ENCODE measurements at regions of chr22 and their contacts with region 1.

Region 1: GRCh38 chr22:42820066-42820763 is 36.9 kb downstream of the ARFGAP3 start:
- DNase-seq: no peak
- ATAC-seq: peak in 2 of 4 donors; percentile 26 to 41
- H3K4me3 ChIP-seq: no peak overlapping the region
- H3K27ac ChIP-seq: peak overlapping the region in 3 of 12 donors; percentile 16 to 39 (median 21)
- H3K4me1 ChIP-seq: peaks cover 0 to 12% (median 5%) of the 10 kb centered on the region in 12 donors
- H3K27me3 ChIP-seq: no peaks in the 10 kb centered on the region
- CTCF ChIP-seq: peak; percentile 37 to 78 (median 64)
- POLR2A ChIP-seq: no peak

Region 2: GRCh38 chr22:42621505-42622002 is 198.7 kb before region 1 on chr22:
- intact Hi-C with region 1: loop called in 4 of 10 experiments (anchors 1 to 10 kb)
- DNase-seq: peak; percentile 64 to 85 (median 73)
- ATAC-seq: peak; percentile 38 to 68 (median 60)
- H3K4me3 ChIP-seq: no peak overlapping the region
- H3K27ac ChIP-seq: peak overlapping the region in 6 of 12 donors; percentile 32 to 67 (median 54)
- H3K4me1 ChIP-seq: peaks cover 0 to 43% (median 20%) of the 10 kb centered on the region in 12 donors
- H3K27me3 ChIP-seq: no peaks in the 10 kb centered on the region
- CTCF ChIP-seq: peak; percentile 85 to 94 (median 91)
- POLR2A ChIP-seq: no peak

Region 3: GRCh38 chr22:42662114-42663021 is 157.8 kb before region 1 on chr22:
- intact Hi-C with region 1: loop called in 9 of 10 experiments (anchors 2 to 10 kb)
- DNase-seq: peak; percentile 81 to 92 (median 84)
- ATAC-seq: peak; percentile 60 to 95 (median 92)
- H3K4me3 ChIP-seq: peak overlapping the region; percentile 26 to 75 (median 57)
- H3K27ac ChIP-seq: peak overlapping the region in 11 of 12 donors; percentile 22 to 76 (median 58)
- H3K4me1 ChIP-seq: peaks cover 0 to 16% (median 11%) of the 10 kb centered on the region in 12 donors
- H3K27me3 ChIP-seq: peaks cover 0 to 9% (median 0%) of the 10 kb centered on the region in 9 donors
- CTCF ChIP-seq: peak in 11 of 12 donors; percentile 77 to 93 (median 84)
- POLR2A ChIP-seq: no peak

Region 4: GRCh38 chr22:42780070-42780540 is 40.1 kb before region 1 on chr22:
- intact Hi-C with region 1: loop called in 3 of 10 experiments (anchors 2 to 5 kb)
- DNase-seq: peak in 2 of 5 donors; percentile 61 to 77
- ATAC-seq: peak; percentile 54 to 88 (median 88)
- H3K4me3 ChIP-seq: no peak overlapping the region
- H3K27ac ChIP-seq: peak overlapping the region in 2 of 12 donors; percentile 46 to 52
- H3K4me1 ChIP-seq: peaks cover 0 to 9% (median 3%) of the 10 kb centered on the region in 12 donors
- H3K27me3 ChIP-seq: no peaks in the 10 kb centered on the region
- CTCF ChIP-seq: peak; percentile 80 to 93 (median 87)
- POLR2A ChIP-seq: no peak

Region 5: DNA sequence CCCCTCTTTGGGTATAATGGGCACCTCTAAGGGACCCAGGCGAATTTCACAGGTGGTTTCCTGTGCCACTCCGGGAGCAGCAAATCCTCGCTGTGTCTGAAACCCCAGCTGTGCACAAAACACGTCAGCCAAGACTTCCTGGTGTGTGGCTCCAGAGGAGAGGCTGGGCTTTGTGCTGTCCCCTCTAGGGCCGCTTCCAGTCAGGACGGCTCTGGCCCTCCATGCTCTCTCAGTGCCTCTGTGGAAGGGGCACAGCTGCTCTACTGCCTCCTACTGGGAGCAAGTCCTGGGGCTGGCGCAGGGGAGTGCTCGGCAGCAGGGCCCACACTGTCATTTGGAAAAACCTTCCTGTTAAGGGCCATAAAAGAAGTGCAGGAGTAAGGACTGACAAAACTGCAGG is 60.6 kb after region 1 on chr22:
- intact Hi-C with region 1: no loop called
- DNase-seq: no peak
- ATAC-seq: no peak
- H3K4me3 ChIP-seq: no peak overlapping the region
- H3K27ac ChIP-seq: no peak overlapping the region
- H3K4me1 ChIP-seq: peaks cover 0 to 41% (median 2%) of the 10 kb centered on the region in 12 donors
- H3K27me3 ChIP-seq: no peaks in the 10 kb centered on the region
- CTCF ChIP-seq: peak in 1 of 12 donors; percentile 17
- POLR2A ChIP-seq: no peak